Endothelial cell of umbilical vein (primary cell): ENCODE measurements at regions of chr2 and their contacts with region 1.

Region 1: GRCh38 chr2:211157856-211158463 is 601.6 kb downstream of the CPS1 start:
- DNase-seq: peak; percentile 67
- H3K4me3 ChIP-seq: no peak overlapping the region
- H3K27ac ChIP-seq: no peak overlapping the region
- H3K4me1 ChIP-seq: no peaks in the 10 kb centered on the region
- H3K27me3 ChIP-seq: peaks cover 0 to 2% of the 10 kb centered on the region in 2 experiments
- CTCF ChIP-seq: peak; percentile 67 to 71
- POLR2A ChIP-seq: no peak

Region 2: GRCh38 chr2:210503001-210503623 is 654.8 kb before region 1 on chr2:
- CTCF ChIA-PET with region 1: interaction called, 6 read pairs
- POLR2A ChIA-PET with region 1: no interaction called
- dilution Hi-C with region 1: no loop called
- intact Hi-C with region 1: loop called (anchors 5 kb)
- DNase-seq: peak; percentile 55
- H3K4me3 ChIP-seq: peak overlapping the region in 1 of 3 experiments; percentile 16
- H3K27ac ChIP-seq: no peak overlapping the region
- H3K4me1 ChIP-seq: no peaks in the 10 kb centered on the region
- H3K27me3 ChIP-seq: peaks cover 0 to 8% of the 10 kb centered on the region in 2 experiments
- CTCF ChIP-seq: peak; percentile 76 to 89
- POLR2A ChIP-seq: no peak

Region 3: DNA sequence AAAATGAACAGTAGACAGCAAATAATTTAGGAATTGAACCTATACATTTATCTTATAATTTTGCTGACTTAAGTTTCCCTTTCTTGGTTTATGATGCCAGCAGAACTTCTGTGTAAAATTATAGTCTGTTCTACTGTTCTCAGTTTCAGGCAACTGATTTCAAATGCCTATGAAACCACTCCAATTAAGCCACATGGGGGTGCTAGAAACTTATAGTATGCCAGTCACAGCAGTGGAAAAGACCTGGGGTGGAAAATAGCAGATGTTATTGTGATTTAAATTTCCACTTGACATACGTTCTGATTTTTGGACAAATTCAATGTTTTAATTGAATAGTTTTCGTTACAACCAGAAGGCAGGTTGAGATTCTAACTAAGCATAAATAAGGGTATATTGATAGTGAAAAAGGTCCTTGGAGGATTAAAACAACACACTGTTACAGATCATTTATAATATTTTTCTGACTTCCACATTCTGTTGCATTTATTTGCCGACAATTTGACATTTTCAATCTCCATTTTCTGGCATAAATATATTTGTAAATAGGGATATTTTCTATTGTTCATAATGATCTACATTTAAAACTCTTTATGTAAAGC is 540.1 kb before region 1 on chr2:
- CTCF ChIA-PET with region 1: interaction called, 19 read pairs
- POLR2A ChIA-PET with region 1: no interaction called
- dilution Hi-C with region 1: no loop called
- intact Hi-C with region 1: loop called (anchors 1 kb)
- DNase-seq: peak; percentile 37
- H3K4me3 ChIP-seq: no peak overlapping the region
- H3K27ac ChIP-seq: no peak overlapping the region
- H3K4me1 ChIP-seq: no peaks in the 10 kb centered on the region
- H3K27me3 ChIP-seq: no peaks in the 10 kb centered on the region
- CTCF ChIP-seq: peak; percentile 33 to 52
- POLR2A ChIP-seq: no peak

Region 4: DNA sequence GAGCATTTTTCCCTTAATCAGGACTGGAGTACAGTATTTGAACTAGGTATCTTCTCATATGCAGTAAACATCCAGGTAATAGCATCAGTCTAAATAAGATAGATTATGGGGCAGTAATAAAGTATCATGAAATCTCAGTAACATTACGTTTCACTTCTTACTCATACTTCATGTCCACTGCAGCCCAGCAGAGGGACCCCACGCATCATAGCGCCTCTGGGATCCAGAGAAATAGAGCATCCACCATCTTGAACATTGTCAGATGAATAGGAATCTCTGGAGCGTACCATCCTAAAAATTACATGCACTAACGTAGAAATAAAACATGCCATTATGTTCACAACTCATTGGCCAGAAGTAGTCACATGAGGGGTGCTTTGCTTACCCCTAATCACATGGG is 102.5 kb before region 1 on chr2:
- CTCF ChIA-PET with region 1: interaction called, 13 read pairs
- POLR2A ChIA-PET with region 1: no interaction called
- dilution Hi-C with region 1: no loop called
- intact Hi-C with region 1: no loop called
- DNase-seq: no peak
- H3K4me3 ChIP-seq: no peak overlapping the region
- H3K27ac ChIP-seq: no peak overlapping the region
- H3K4me1 ChIP-seq: no peaks in the 10 kb centered on the region
- H3K27me3 ChIP-seq: no peaks in the 10 kb centered on the region
- CTCF ChIP-seq: peak in 1 of 2 donors; percentile 5
- POLR2A ChIP-seq: no peak

Region 5: GRCh38 chr2:211085056-211085680 is 72.8 kb before region 1 on chr2:
- CTCF ChIA-PET with region 1: interaction called, 275 read pairs
- POLR2A ChIA-PET with region 1: no interaction called
- dilution Hi-C with region 1: no loop called
- intact Hi-C with region 1: loop called (anchors 1 kb)
- DNase-seq: peak; percentile 43
- H3K4me3 ChIP-seq: no peak overlapping the region
- H3K27ac ChIP-seq: no peak overlapping the region
- H3K4me1 ChIP-seq: no peaks in the 10 kb centered on the region
- H3K27me3 ChIP-seq: peaks cover 0 to 4% of the 10 kb centered on the region in 2 experiments
- CTCF ChIP-seq: peak; percentile 46
- POLR2A ChIP-seq: no peak

Region 6: GRCh38 chr2:211132586-211132985 is 25.4 kb before region 1 on chr2:
- CTCF ChIA-PET with region 1: interaction called, 11 read pairs
- POLR2A ChIA-PET with region 1: no interaction called
- dilution Hi-C with region 1: no loop called
- intact Hi-C with region 1: no loop called
- DNase-seq: peak; percentile 51
- H3K4me3 ChIP-seq: no peak overlapping the region
- H3K27ac ChIP-seq: no peak overlapping the region
- H3K4me1 ChIP-seq: peaks cover 14% of the 10 kb centered on the region
- H3K27me3 ChIP-seq: no peaks in the 10 kb centered on the region
- CTCF ChIP-seq: no peak
- POLR2A ChIP-seq: no peak